ENCODE measurements at regions of chr7 and their contacts with region 1.

Region 1: DNA sequence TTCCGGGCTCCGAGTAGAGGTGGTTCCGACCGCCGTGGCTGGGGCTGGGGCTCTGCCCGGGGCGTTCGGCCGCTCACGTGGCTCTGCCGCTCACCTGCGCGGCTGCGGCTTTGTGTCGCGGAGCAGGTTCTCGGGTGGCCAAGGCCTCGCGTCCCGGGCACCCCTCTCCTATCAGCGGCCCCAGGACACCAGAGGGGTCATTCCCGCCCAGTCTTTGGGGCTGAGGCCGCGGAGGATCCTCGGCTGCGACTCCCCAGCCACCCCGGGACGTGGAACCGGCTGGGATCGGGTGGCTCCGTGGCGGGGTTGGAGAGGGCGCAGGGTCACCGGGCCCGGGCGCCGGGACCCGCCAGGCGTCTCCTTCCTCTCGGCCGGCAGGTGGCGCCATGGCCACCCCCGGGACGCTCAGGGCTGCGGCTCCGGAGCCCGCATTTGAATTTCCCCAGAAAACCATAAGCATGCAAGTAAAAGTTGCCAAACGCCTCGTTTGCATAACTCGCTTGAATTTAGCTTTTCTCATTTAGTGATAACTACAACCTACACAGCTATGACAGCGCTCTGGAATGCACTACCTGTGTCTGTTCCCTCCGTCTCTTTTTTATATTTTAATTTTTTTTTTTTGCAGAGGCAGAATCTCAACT is 1.2 kb downstream of the COL26A1 start:
- DNase-seq: peak; percentile 59
- H3K4me3 ChIP-seq: peak overlapping the region; percentile 39 to 56
- H3K27ac ChIP-seq: peak overlapping the region; percentile 67 to 71
- H3K4me1 ChIP-seq: no peaks in the 10 kb centered on the region
- H3K27me3 ChIP-seq: no peaks in the 10 kb centered on the region
- CTCF ChIP-seq: peak; percentile 83 to 93 (median 90)
- POLR2A ChIP-seq: no peak

Region 2: DNA sequence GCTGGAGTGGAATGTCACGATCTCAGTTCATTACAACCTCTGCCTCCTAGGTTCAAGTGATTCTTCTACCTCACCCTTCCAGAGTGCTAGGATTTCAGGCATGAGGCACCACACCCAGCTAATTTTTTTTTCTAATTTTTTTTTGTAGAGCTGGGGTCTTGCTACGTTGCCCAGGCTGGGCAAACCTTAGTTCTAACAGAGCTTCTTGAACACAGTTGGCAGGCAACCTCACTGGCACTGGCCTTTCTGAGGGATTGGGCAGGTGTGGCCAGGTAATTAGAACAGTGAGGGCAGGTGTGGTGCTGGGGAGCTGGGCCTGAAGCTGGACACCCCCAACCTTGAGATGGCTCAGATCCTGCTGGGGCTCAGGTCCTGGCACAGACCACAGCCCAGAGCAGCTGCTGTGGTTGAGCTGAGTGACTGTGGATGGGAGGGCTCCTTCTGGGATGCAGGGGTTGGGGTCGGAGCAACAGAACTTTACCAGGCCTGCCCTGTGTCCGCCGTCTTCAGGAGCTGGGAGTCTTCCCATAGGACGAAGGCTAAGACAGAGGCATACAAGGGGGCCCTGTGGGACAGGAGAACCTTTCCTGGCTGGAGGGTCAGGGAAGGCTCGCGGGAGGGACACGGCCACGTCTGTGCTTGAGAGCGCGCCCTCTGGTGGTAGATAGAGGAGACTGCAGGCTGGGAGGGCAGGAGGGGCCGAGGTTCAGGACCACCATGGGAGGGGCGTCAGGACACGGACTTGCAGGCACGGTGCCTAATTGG is 47.1 kb after region 1 on chr7:
- intact Hi-C with region 1: loop called (anchors 5 kb)
- DNase-seq: peak; percentile 23
- H3K4me3 ChIP-seq: no peak overlapping the region
- H3K27ac ChIP-seq: no peak overlapping the region
- H3K4me1 ChIP-seq: no peaks in the 10 kb centered on the region
- H3K27me3 ChIP-seq: no peaks in the 10 kb centered on the region
- CTCF ChIP-seq: peak; percentile 86 to 94 (median 90)
- POLR2A ChIP-seq: no peak

Region 3: GRCh38 chr7:101507791-101508252 is 144.0 kb after region 1 on chr7:
- intact Hi-C with region 1: loop called (anchors 10 kb)
- DNase-seq: peak; percentile 40
- H3K4me3 ChIP-seq: no peak overlapping the region
- H3K27ac ChIP-seq: no peak overlapping the region
- H3K4me1 ChIP-seq: no peaks in the 10 kb centered on the region
- H3K27me3 ChIP-seq: no peaks in the 10 kb centered on the region
- CTCF ChIP-seq: peak in 3 of 4 experiments; percentile 63 to 79 (median 74)
- POLR2A ChIP-seq: no peak

Measured in prostate gland (tissue), 2 donors.